ENCODE measurements at regions of chr3 and their contacts with region 1.

Region 1: GRCh38 chr3:177197041-177197727 is at the start of gene TBL1XR1:
- DNase-seq: peak; percentile 91 to 92 (median 92)
- H3K4me3 ChIP-seq: peak within 1 kb of the TSS; percentile 92 to 97
- H3K4me3 Mint-ChIP-seq: peak within 1 kb of the TSS; percentile 91 to 99 (median 98)
- H3K27ac ChIP-seq: peak within 1 kb of the TSS; percentile 89
- H3K27ac Mint-ChIP-seq: peak within 1 kb of the TSS; percentile 75 to 99 (median 98)
- H3K4me1 ChIP-seq: peaks cover 64% of the 10 kb centered on the region
- H3K4me1 Mint-ChIP-seq: peaks cover 44 to 78% (median 59%) of the 10 kb centered on the region in 4 donors
- H3K27me3 ChIP-seq: no peaks in the 10 kb centered on the region
- H3K27me3 Mint-ChIP-seq: no peaks in the 10 kb centered on the region
- total RNA-seq, gene TBL1XR1: 159 to 172 TPM

Region 2: GRCh38 chr3:176345322-176345721 is 851.9 kb before region 1 on chr3:
- CTCF ChIA-PET with region 1: no interaction called
- POLR2A ChIA-PET with region 1: no interaction called
- intact Hi-C with region 1: no loop called
- DNase-seq: no peak
- H3K4me3 ChIP-seq: no peak overlapping the region
- H3K4me3 Mint-ChIP-seq: no peak overlapping the region
- H3K27ac ChIP-seq: no peak overlapping the region
- H3K27ac Mint-ChIP-seq: no peak overlapping the region
- H3K4me1 ChIP-seq: no peaks in the 10 kb centered on the region
- H3K4me1 Mint-ChIP-seq: no peaks in the 10 kb centered on the region
- H3K27me3 ChIP-seq: no peaks in the 10 kb centered on the region
- H3K27me3 Mint-ChIP-seq: peaks cover 0 to 3% of the 10 kb centered on the region in 2 donors

Region 3: DNA sequence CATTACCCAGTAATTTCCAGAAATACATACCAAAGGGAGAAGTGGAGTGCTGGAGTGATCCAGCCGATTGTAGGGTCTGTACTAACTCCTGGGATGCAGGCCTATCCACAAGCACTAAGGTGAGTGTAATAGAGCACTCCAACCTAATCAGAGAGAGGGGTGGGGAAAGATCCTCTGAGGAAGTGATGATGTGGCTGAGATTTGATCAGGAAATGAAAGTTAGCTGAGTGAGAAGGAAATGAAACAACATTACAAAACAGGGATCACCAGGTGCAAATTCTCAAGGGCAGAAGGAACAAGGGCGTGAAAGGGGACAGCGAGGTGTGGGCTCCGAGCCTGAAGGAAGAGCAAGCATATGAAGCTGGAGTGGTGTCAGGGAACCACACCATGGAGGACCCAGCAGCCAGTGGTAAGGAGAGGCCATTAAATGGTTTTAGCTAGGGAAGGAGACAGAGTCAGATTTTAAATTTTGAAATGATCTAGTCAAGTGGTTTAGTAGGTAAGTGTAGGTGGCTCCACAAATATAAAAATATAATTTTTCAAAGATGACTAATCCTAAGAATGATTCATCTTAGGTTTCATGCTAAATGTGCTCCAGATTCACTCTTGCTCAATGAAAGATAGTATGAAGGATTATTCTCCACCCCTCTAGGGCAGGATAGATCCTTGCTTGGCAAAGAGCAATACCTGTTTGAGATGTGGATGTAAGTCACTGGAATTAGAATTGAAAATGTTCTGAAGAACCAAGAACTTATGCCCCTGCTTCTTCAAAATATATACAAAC is 348.6 kb before region 1 on chr3:
- CTCF ChIA-PET with region 1: no interaction called
- POLR2A ChIA-PET with region 1: no interaction called
- intact Hi-C with region 1: no loop called
- DNase-seq: no peak
- H3K4me3 ChIP-seq: no peak overlapping the region
- H3K4me3 Mint-ChIP-seq: no peak overlapping the region
- H3K27ac ChIP-seq: no peak overlapping the region
- H3K27ac Mint-ChIP-seq: no peak overlapping the region
- H3K4me1 ChIP-seq: no peaks in the 10 kb centered on the region
- H3K4me1 Mint-ChIP-seq: no peaks in the 10 kb centered on the region
- H3K27me3 ChIP-seq: no peaks in the 10 kb centered on the region
- H3K27me3 Mint-ChIP-seq: peaks cover 0 to 3% of the 10 kb centered on the region in 2 donors

Region 4: DNA sequence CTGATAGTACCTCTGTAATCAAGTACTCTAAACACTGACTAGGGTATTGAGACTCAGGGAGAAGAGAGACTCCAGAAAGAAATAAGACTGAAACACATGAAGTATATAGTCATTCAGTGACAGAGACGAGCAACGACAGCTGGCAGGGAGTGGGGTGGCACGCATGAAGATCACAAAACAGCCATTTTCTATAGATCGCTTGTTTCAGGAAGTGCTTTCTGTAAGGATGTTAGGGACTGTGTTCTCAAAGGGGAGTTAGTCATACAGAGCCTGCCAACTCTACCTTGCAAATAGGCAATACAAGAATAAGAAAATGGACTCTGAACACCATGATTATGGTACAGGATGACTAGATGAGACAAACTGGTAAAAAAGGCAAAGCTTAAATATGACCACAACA is 139.4 kb before region 1 on chr3:
- CTCF ChIA-PET with region 1: interaction called, 28 read pairs
- POLR2A ChIA-PET with region 1: interaction called, 61 read pairs
- intact Hi-C with region 1: no loop called
- DNase-seq: peak; percentile 13 to 46 (median 35)
- H3K4me3 ChIP-seq: no peak overlapping the region
- H3K4me3 Mint-ChIP-seq: no peak overlapping the region
- H3K27ac ChIP-seq: no peak overlapping the region
- H3K27ac Mint-ChIP-seq: no peak overlapping the region
- H3K4me1 ChIP-seq: peaks cover 44% of the 10 kb centered on the region
- H3K4me1 Mint-ChIP-seq: peaks cover 25 to 37% (median 29%) of the 10 kb centered on the region in 4 donors
- H3K27me3 ChIP-seq: no peaks in the 10 kb centered on the region
- H3K27me3 Mint-ChIP-seq: no peaks in the 10 kb centered on the region

Region 5: DNA sequence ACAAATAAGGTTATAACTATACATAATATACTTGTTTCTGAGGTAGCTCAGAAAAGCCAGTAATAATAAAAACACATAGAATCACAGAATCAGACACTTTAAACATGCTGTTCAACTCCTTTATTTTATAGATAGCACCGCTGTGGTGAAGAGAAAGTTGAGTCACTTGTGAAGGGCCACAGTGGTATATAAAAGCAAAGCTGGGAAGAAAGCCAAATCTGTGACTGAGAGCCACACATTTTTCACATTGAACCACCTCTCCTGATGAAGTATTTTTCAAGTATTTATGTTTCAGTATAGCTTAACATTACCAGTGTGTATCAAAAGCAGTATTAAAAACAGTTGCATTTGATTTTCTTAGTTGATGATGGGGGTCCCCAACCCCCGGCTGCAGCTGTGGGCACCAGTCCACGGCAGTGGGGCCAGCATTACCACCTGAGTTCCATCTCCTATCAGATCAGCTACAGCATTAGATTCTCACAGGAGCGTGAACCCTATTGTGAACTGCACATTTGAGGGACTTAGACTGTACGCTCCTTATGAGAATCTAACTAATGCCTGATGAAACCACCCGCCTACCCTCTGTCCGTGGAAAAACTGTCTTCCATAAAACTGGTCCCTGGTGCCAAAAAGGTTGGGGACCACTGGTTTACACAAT is 46.1 kb before region 1 on chr3:
- CTCF ChIA-PET with region 1: interaction called, 10 read pairs
- POLR2A ChIA-PET with region 1: interaction called, 78 read pairs
- intact Hi-C with region 1: loop called (anchors 2 kb)
- DNase-seq: peak in 4 of 5 donors; percentile 22 to 55 (median 33)
- H3K4me3 ChIP-seq: no peak overlapping the region
- H3K4me3 Mint-ChIP-seq: peak overlapping the region; percentile 28 to 80 (median 58)
- H3K27ac ChIP-seq: no peak overlapping the region
- H3K27ac Mint-ChIP-seq: peak overlapping the region; percentile 33 to 83 (median 67)
- H3K4me1 ChIP-seq: peaks cover 83% of the 10 kb centered on the region
- H3K4me1 Mint-ChIP-seq: peaks cover 49 to 79% (median 60%) of the 10 kb centered on the region in 4 donors
- H3K27me3 ChIP-seq: no peaks in the 10 kb centered on the region
- H3K27me3 Mint-ChIP-seq: no peaks in the 10 kb centered on the region

Region 6: GRCh38 chr3:177220136-177220974 is 23.2 kb after region 1 on chr3:
- CTCF ChIA-PET with region 1: no interaction called
- POLR2A ChIA-PET with region 1: interaction called, 7 read pairs
- intact Hi-C with region 1: loop called (anchors 2 kb)
- DNase-seq: no peak
- H3K4me3 ChIP-seq: no peak overlapping the region
- H3K4me3 Mint-ChIP-seq: no peak overlapping the region
- H3K27ac ChIP-seq: no peak overlapping the region
- H3K27ac Mint-ChIP-seq: peak overlapping the region in 2 of 7 donors; percentile 26 to 78
- H3K4me1 ChIP-seq: peaks cover 13% of the 10 kb centered on the region
- H3K4me1 Mint-ChIP-seq: peaks cover 15 to 26% (median 21%) of the 10 kb centered on the region in 4 donors
- H3K27me3 ChIP-seq: no peaks in the 10 kb centered on the region
- H3K27me3 Mint-ChIP-seq: no peaks in the 10 kb centered on the region

Region 7: DNA sequence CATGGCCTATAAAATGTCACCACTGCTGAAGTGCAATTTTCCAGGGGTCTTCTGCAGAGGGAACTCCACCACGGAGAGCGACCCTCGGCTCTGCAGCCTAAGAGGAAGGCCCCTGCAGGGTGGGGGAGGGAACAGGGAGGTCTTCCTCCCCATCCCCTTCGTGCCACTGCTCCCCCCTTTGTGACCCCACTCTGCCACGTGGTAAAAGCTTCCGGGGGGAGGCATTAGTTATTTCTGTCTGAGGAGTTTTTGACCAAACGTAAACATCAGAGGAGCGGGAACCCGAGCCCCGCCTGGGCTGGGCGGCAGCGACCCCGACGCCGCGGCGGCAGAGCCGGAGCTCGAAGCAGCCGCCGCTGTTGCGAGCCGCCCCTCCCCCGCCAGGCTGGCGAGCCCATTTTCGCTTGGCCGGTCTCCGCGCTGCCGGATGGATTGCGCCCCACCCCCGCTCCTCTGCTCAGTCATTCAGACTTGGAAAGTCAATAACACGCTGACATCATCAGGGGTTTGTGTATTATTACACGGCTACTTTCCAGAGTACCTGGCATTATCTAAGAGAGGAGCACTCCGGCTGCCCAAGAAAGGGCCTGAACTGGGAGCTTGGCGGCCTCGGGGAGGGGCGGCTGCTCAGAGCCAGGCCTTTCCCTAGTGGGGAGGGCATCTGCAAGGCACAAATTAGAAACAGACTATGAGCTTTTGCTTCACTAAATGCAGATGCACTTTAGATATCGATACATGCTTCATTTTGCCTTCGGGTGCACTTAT is 162.6 kb after region 1 on chr3:
- CTCF ChIA-PET with region 1: interaction called, 126 read pairs
- POLR2A ChIA-PET with region 1: interaction called, 529 read pairs
- intact Hi-C with region 1: loop called (anchors 1 kb)
- DNase-seq: peak; percentile 95 to 96 (median 96)
- H3K4me3 ChIP-seq: peak overlapping the region; percentile 54 to 65
- H3K4me3 Mint-ChIP-seq: peak overlapping the region; percentile 88 to 98 (median 94)
- H3K27ac ChIP-seq: peak overlapping the region; percentile 96
- H3K27ac Mint-ChIP-seq: peak overlapping the region; percentile 96 to 100 (median 99)
- H3K4me1 ChIP-seq: peaks cover 50% of the 10 kb centered on the region
- H3K4me1 Mint-ChIP-seq: peaks cover 33 to 63% (median 49%) of the 10 kb centered on the region in 4 donors
- H3K27me3 ChIP-seq: no peaks in the 10 kb centered on the region
- H3K27me3 Mint-ChIP-seq: peaks cover 1 to 7% of the 10 kb centered on the region in 2 donors

Region 8: DNA sequence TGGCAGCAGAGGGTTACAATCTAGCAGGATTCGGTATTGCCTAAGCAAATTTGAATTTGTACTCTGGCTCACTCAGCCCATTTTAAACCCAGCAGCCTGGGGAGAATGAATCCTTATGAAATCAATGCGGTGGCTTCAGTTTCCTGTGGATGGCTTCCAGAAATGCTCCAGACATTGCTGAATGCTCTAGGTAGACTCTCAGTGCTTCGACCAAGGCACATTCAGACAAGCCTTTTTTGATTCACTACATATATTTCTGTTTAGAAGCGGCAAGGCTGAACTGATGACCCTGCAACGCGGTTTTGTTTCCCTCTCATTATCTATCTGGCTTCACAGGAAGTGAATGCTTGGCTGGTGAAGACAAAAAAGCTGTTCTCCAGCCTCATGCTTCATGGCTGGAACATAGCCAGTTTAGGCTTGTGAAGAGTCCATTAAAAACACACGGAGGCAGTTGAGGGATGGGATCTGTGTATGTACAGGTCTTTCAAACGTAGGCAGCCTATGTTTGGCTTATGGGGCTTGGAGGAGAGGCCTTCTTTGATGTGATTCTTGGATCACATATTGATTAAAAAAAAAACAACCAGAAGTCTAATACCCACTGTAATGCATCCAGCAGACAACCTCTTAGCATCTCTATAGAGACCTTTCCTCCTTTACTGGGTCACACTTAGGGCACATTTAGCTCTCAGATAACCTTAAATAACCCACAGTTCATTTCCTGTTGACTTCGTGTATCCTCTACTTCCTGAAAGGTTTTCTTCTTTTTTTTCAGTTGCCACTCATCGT is 400.3 kb after region 1 on chr3:
- CTCF ChIA-PET with region 1: interaction called, 9 read pairs
- POLR2A ChIA-PET with region 1: interaction called, 14 read pairs
- intact Hi-C with region 1: loop called (anchors 5 kb)
- DNase-seq: peak; percentile 55 to 67 (median 57)
- H3K4me3 ChIP-seq: peak overlapping the region; percentile 18 to 49
- H3K4me3 Mint-ChIP-seq: peak overlapping the region; percentile 10 to 87 (median 77)
- H3K27ac ChIP-seq: peak overlapping the region; percentile 60
- H3K27ac Mint-ChIP-seq: peak overlapping the region; percentile 92 to 97 (median 95)
- H3K4me1 ChIP-seq: peaks cover 83% of the 10 kb centered on the region
- H3K4me1 Mint-ChIP-seq: peaks cover 67 to 90% (median 75%) of the 10 kb centered on the region in 4 donors
- H3K27me3 ChIP-seq: no peaks in the 10 kb centered on the region
- H3K27me3 Mint-ChIP-seq: no peaks in the 10 kb centered on the region

Region 9: GRCh38 chr3:177777699-177778098 is 580.5 kb after region 1 on chr3:
- CTCF ChIA-PET with region 1: interaction called, 5 read pairs
- POLR2A ChIA-PET with region 1: interaction called, 6 read pairs
- intact Hi-C with region 1: loop called (anchors 1 kb)
- DNase-seq: peak; percentile 8 to 44 (median 26)
- H3K4me3 ChIP-seq: no peak overlapping the region
- H3K4me3 Mint-ChIP-seq: peak overlapping the region in 2 of 8 donors; percentile 17 to 41
- H3K27ac ChIP-seq: no peak overlapping the region
- H3K27ac Mint-ChIP-seq: peak overlapping the region in 3 of 7 donors; percentile 52 to 73 (median 55)
- H3K4me1 ChIP-seq: peaks cover 22% of the 10 kb centered on the region
- H3K4me1 Mint-ChIP-seq: peaks cover 12 to 17% (median 15%) of the 10 kb centered on the region in 4 donors
- H3K27me3 ChIP-seq: no peaks in the 10 kb centered on the region
- H3K27me3 Mint-ChIP-seq: no peaks in the 10 kb centered on the region

Measured in CD4-positive, alpha-beta memory T cell (primary cell).